CD8-positive, alpha-beta memory T cell (primary cell): ENCODE measurements at regions of chrX and their contacts with region 1.

Region 1: GRCh38 chrX:71181910-71182799 is 37.5 kb downstream of the NLGN3 start:
- DNase-seq: peak; percentile 65 to 89 (median 82)
- H3K4me3 ChIP-seq: peak overlapping the region; percentile 80
- H3K4me3 Mint-ChIP-seq: peak overlapping the region; percentile 94 to 98 (median 96)
- H3K27ac ChIP-seq: peak overlapping the region; percentile 88
- H3K27ac Mint-ChIP-seq: peak overlapping the region; percentile 95 to 100 (median 99)
- H3K4me1 ChIP-seq: peaks cover 6% of the 10 kb centered on the region
- H3K4me1 Mint-ChIP-seq: peaks cover 8 to 31% (median 23%) of the 10 kb centered on the region in 3 donors
- H3K27me3 ChIP-seq: no peaks in the 10 kb centered on the region
- H3K27me3 Mint-ChIP-seq: peaks cover 0 to 10% of the 10 kb centered on the region in 2 donors

Region 2: DNA sequence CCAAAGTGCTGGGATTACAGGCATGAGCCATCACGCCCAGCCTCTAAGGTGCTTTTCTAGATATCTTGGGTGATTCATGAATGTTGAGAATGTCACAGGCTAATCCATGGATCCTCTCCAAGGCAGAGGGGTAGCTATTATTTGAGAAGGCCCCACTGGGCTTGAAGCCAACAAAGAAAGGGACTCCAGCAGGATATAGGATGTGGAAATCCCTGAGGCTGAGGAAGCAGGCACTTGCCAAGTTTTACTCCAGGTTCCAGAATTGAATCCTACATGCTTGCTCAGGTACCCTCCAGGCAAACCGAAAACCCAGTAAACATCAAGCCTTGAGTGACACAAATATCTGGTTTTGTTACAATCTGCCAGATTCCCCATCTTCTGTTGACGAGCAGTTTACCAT is 21.7 kb before region 1 on chrX:
- CTCF ChIA-PET with region 1: no interaction called
- POLR2A ChIA-PET with region 1: no interaction called
- DNase-seq: no peak
- H3K4me3 ChIP-seq: no peak overlapping the region
- H3K4me3 Mint-ChIP-seq: no peak overlapping the region
- H3K27ac ChIP-seq: no peak overlapping the region
- H3K27ac Mint-ChIP-seq: no peak overlapping the region
- H3K4me1 ChIP-seq: no peaks in the 10 kb centered on the region
- H3K4me1 Mint-ChIP-seq: peaks cover 4 to 14% (median 11%) of the 10 kb centered on the region in 3 donors
- H3K27me3 ChIP-seq: no peaks in the 10 kb centered on the region
- H3K27me3 Mint-ChIP-seq: peaks cover 0 to 13% of the 10 kb centered on the region in 2 donors

Region 3: GRCh38 chrX:71198066-71198465 is 15.9 kb after region 1 on chrX:
- CTCF ChIA-PET with region 1: interaction called, 11 read pairs
- POLR2A ChIA-PET with region 1: interaction called, 13 read pairs
- DNase-seq: peak in 2 of 5 donors; percentile 26 to 32
- H3K4me3 ChIP-seq: peak overlapping the region; percentile 66
- H3K4me3 Mint-ChIP-seq: peak overlapping the region; percentile 86 to 93 (median 92)
- H3K27ac ChIP-seq: peak overlapping the region; percentile 20
- H3K27ac Mint-ChIP-seq: peak overlapping the region; percentile 29 to 97 (median 90)
- H3K4me1 ChIP-seq: peaks cover 12% of the 10 kb centered on the region
- H3K4me1 Mint-ChIP-seq: peaks cover 12 to 30% (median 25%) of the 10 kb centered on the region in 3 donors
- H3K27me3 ChIP-seq: no peaks in the 10 kb centered on the region
- H3K27me3 Mint-ChIP-seq: peaks cover 0 to 5% of the 10 kb centered on the region in 2 donors

Region 4: GRCh38 chrX:71254092-71254941 is 72.2 kb after region 1 on chrX and contains the start of gene ZMYM3:
- CTCF ChIA-PET with region 1: interaction called, 11 read pairs
- POLR2A ChIA-PET with region 1: interaction called, 9 read pairs
- DNase-seq: peak; percentile 73 to 90 (median 79)
- H3K4me3 ChIP-seq: peak within 1 kb of the TSS; percentile 81
- H3K4me3 Mint-ChIP-seq: peak within 1 kb of the TSS; percentile 84 to 96 (median 90)
- H3K27ac ChIP-seq: peak within 1 kb of the TSS; percentile 76
- H3K27ac Mint-ChIP-seq: peak within 1 kb of the TSS; percentile 79 to 100 (median 94)
- H3K4me1 ChIP-seq: peaks cover 28% of the 10 kb centered on the region
- H3K4me1 Mint-ChIP-seq: peaks cover 15 to 32% (median 17%) of the 10 kb centered on the region in 3 donors
- H3K27me3 ChIP-seq: no peaks in the 10 kb centered on the region
- H3K27me3 Mint-ChIP-seq: peaks cover 0 to 8% of the 10 kb centered on the region in 2 donors
- total RNA-seq, gene ZMYM3: 16.5 to 16.7 TPM

Region 5: GRCh38 chrX:71283403-71284143 is 101.4 kb after region 1 on chrX and contains the start of gene NONO:
- CTCF ChIA-PET with region 1: interaction called, 3 read pairs
- POLR2A ChIA-PET with region 1: interaction called, 15 read pairs
- DNase-seq: peak; percentile 74 to 92 (median 88)
- H3K4me3 ChIP-seq: peak within 1 kb of the TSS; percentile 65
- H3K4me3 Mint-ChIP-seq: peak within 1 kb of the TSS; percentile 95 to 100 (median 97)
- H3K27ac ChIP-seq: peak within 1 kb of the TSS; percentile 89
- H3K27ac Mint-ChIP-seq: peak within 1 kb of the TSS; percentile 98 to 100 (median 99)
- H3K4me1 ChIP-seq: peaks cover 16% of the 10 kb centered on the region
- H3K4me1 Mint-ChIP-seq: peaks cover 25 to 39% (median 32%) of the 10 kb centered on the region in 3 donors
- H3K27me3 ChIP-seq: no peaks in the 10 kb centered on the region
- H3K27me3 Mint-ChIP-seq: peaks cover 0 to 3% of the 10 kb centered on the region in 2 donors
- total RNA-seq, gene NONO: 532 to 542 TPM